ENCODE measurements at regions of chr9 and their contacts with region 1.

Region 1: DNA sequence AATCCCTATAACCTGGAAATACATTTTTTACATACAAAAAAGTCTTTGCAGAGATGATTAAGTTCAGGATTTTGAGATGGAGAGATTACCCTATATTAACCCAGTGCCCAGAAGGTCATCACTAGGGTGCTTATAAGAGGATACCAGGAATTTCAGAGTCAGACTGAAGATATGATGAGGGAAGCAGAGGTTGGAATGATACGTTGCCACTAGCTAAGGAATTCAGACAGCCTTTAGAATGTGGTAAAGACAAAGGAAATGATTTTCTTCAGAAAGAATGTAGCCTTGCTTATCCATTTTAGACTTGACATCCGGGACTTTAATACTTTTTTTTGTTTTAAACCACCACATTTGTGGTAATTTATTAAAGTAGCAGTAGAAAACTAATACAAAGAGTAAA is 2176.8 kb upstream of the C9orf72 start:
- DNase-seq: no peak
- H3K4me3 ChIP-seq: no peak overlapping the region
- H3K27ac ChIP-seq: no peak overlapping the region
- H3K4me1 ChIP-seq: no peaks in the 10 kb centered on the region
- H3K27me3 ChIP-seq: no peaks in the 10 kb centered on the region
- CTCF ChIP-seq: no peak

Region 2: GRCh38 chr9:29796291-29796952 is 46.4 kb after region 1 on chr9:
- intact Hi-C with region 1: loop called (anchors 5 kb)
- DNase-seq: no peak
- H3K4me3 ChIP-seq: no peak overlapping the region
- H3K27ac ChIP-seq: no peak overlapping the region
- H3K4me1 ChIP-seq: no peaks in the 10 kb centered on the region
- H3K27me3 ChIP-seq: no peaks in the 10 kb centered on the region
- CTCF ChIP-seq: no peak

Measured in kidney (tissue), 22 donors.